PC-9 (cell line): ENCODE measurements at regions of chr9 and their contacts with region 1.

Region 1: DNA sequence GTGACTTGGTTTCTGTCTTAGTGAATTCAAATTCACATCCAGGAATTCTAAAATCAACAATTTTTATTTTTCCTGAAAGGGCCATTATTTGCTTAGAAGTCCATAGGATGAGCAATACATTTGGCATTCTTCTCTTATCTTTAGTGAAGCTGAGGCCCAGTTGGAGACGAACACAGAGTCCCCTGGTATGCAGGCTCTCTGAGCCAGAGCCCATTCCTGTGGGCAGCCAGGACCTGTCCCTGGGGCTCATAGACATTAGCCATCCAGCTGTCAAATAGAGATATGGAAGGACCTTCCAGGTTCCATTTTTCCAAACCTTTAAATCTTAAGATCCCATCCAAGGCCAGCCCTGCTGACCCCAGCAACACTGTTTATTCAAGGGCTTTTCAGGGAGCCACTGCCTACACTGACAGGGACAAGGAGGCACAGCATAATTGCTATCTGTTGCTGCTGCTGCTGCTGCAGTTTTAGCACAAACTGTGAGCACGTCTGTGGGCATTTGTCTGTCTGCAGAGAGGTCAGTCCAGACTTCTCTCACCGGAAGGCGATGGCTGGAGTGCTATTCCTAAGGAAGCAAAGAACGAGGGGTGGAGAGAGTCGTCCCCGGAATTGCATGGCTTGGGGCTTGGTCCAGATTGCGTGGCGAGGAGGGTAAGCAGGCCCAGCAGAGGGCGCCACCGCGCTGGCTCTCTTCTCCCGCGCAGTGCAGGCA is 639.0 kb downstream of the CCDC171 start:
- DNase-seq: peak; percentile 58 to 66
- H3K4me3 ChIP-seq: no peak overlapping the region
- H3K27ac ChIP-seq: peak overlapping the region; percentile 41; the same call in 1 of the 2 replicates
- H3K4me1 ChIP-seq: peaks cover 11% of the 10 kb centered on the region; the same call in 1 of the 2 replicates
- H3K27me3 ChIP-seq: no peaks in the 10 kb centered on the region
- CTCF ChIP-seq: peak; percentile 64

Region 2: GRCh38 chr9:16030513-16031185 is 161.2 kb before region 1 on chr9:
- CTCF ChIA-PET with region 1: no interaction called
- POLR2A ChIA-PET with region 1: no interaction called
- intact Hi-C with region 1: loop called (anchors 10 kb)
- DNase-seq: peak; percentile 79 to 85
- H3K4me3 ChIP-seq: no peak overlapping the region
- H3K27ac ChIP-seq: peak overlapping the region; percentile 77
- H3K4me1 ChIP-seq: peaks cover 12% of the 10 kb centered on the region
- H3K27me3 ChIP-seq: no peaks in the 10 kb centered on the region
- CTCF ChIP-seq: no peak

Region 3: GRCh38 chr9:16425562-16426231 is 233.8 kb after region 1 on chr9:
- CTCF ChIA-PET with region 1: no interaction called
- POLR2A ChIA-PET with region 1: no interaction called
- intact Hi-C with region 1: loop called (anchors 2 kb)
- DNase-seq: no peak
- H3K4me3 ChIP-seq: no peak overlapping the region
- H3K27ac ChIP-seq: no peak overlapping the region
- H3K4me1 ChIP-seq: no peaks in the 10 kb centered on the region
- H3K27me3 ChIP-seq: no peaks in the 10 kb centered on the region
- CTCF ChIP-seq: no peak

Region 4: GRCh38 chr9:16705121-16705604 is 513.3 kb after region 1 on chr9:
- CTCF ChIA-PET with region 1: no interaction called
- POLR2A ChIA-PET with region 1: no interaction called
- intact Hi-C with region 1: loop called (anchors 2 kb)
- DNase-seq: peak; percentile 77 to 88
- H3K4me3 ChIP-seq: peak overlapping the region; percentile 49
- H3K27ac ChIP-seq: peak overlapping the region; percentile 95
- H3K4me1 ChIP-seq: peaks cover 48% of the 10 kb centered on the region
- H3K27me3 ChIP-seq: no peaks in the 10 kb centered on the region
- CTCF ChIP-seq: no peak